ENCODE measurements at regions of chr7 and their contacts with region 1.

Region 1: GRCh38 chr7:143008007-143008901 is 18.7 kb downstream of the OR9A2 start:
- DNase-seq: peak; percentile 55 to 80
- H3K4me3 ChIP-seq: no peak overlapping the region
- H3K27ac ChIP-seq: no peak overlapping the region
- H3K4me1 ChIP-seq: peaks cover 1% of the 10 kb centered on the region; the same call in 1 of the 2 replicates
- H3K27me3 ChIP-seq: no peaks in the 10 kb centered on the region
- CTCF ChIP-seq: peak; percentile 99

Region 2: DNA sequence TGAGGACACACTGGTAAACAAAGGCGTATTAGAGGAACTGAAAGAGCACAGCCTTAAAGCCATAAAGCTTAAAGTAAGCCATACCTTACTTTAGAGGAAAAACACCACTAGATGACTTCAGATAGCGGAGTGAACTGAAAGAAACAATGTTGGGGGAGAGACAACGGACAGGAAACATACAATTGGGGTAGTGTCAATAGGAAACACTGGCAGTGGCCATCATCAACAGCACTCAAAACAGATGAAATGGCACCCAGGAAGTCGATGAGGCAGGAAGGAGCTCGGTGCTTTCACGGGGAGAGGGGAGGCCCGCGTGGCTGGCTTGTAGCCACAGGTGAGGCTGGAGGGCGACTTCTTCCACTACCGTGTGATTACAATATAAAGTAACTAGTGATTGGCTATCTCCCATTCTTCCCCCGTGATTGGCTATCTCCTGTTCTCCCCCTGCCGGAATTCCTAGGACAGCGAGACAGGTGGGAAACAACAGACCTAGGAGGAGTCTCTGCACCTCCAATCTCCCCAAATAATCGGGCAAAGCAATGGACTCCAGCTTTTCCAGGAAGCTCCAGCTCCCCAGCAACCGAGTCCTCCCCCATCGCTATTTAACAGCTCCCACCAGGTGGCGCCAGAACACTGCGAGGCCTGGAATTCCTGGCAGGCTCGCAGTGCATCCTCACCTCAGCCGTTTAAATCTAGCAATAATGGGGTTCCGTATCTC is 1032.3 kb before region 1 on chr7:
- CTCF ChIA-PET with region 1: no interaction called
- POLR2A ChIA-PET with region 1: no interaction called
- intact Hi-C with region 1: loop called (anchors 10 kb)
- DNase-seq: peak; percentile 44 to 86
- H3K4me3 ChIP-seq: no peak overlapping the region
- H3K27ac ChIP-seq: no peak overlapping the region
- H3K4me1 ChIP-seq: no peaks in the 10 kb centered on the region; the same call in 1 of the 2 replicates
- H3K27me3 ChIP-seq: no peaks in the 10 kb centered on the region
- CTCF ChIP-seq: peak; percentile 96

Region 3: GRCh38 chr7:142338633-142339501 is 669.4 kb before region 1 on chr7:
- CTCF ChIA-PET with region 1: interaction called, 5 read pairs
- POLR2A ChIA-PET with region 1: no interaction called
- intact Hi-C with region 1: loop called (anchors 5 kb)
- DNase-seq: peak; percentile 61 to 88
- H3K4me3 ChIP-seq: no peak overlapping the region
- H3K27ac ChIP-seq: no peak overlapping the region
- H3K4me1 ChIP-seq: no peaks in the 10 kb centered on the region
- H3K27me3 ChIP-seq: no peaks in the 10 kb centered on the region
- CTCF ChIP-seq: peak; percentile 76

Region 4: GRCh38 chr7:142516038-142516501 is 492.2 kb before region 1 on chr7:
- CTCF ChIA-PET with region 1: no interaction called
- POLR2A ChIA-PET with region 1: no interaction called
- intact Hi-C with region 1: loop called (anchors 5 kb)
- DNase-seq: peak; percentile 72 to 87
- H3K4me3 ChIP-seq: no peak overlapping the region
- H3K27ac ChIP-seq: peak overlapping the region; percentile 79
- H3K4me1 ChIP-seq: peaks cover 48% of the 10 kb centered on the region
- H3K27me3 ChIP-seq: no peaks in the 10 kb centered on the region
- CTCF ChIP-seq: peak; percentile 97

Region 5: DNA sequence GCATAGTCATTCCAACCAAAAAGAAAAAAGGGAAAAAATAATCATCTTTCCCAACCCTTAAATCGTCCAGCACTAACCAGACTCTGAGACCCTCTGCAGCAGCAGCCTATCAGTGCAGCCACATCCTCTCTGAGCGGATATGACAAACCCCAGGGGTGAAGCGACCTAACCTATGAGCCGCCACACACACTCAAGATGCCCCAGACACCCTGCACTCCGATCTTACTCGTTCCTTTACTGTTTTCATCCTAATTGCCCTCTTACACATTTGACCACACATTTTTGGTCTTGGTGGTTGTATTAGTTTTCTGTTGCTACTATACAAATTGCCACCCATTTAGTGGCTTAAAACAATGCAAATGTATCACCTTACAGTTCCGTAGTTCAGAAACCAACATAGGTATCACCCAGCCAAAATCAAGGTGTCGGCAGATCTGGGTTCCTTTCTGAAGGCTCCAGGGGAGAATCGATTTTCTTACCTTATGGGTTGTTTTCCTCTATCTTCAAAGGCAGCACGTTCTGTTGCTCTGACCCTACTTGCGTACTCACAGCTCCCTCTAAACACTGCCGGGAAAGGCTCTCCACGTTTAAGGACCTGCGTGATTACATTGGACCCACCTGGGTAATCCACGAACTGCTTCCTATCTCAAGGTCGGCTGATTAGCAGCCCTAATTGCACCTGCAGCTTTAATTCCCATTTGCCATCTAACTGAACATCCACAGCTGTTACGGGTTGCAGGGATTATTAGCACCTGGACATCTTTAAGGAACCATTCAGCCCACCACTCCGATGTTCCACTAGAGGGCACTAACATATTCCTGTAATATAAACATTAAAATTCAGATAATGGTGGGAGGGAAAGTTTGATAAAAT is 296.3 kb before region 1 on chr7:
- CTCF ChIA-PET with region 1: interaction called, 3 read pairs
- POLR2A ChIA-PET with region 1: no interaction called
- intact Hi-C with region 1: loop called (anchors 5 kb)
- DNase-seq: peak in 1 of 2 experiments; percentile 54
- H3K4me3 ChIP-seq: no peak overlapping the region
- H3K27ac ChIP-seq: no peak overlapping the region
- H3K4me1 ChIP-seq: no peaks in the 10 kb centered on the region
- H3K27me3 ChIP-seq: no peaks in the 10 kb centered on the region
- CTCF ChIP-seq: peak; percentile 88

Region 6: GRCh38 chr7:142853739-142854371 is 154.4 kb before region 1 on chr7:
- CTCF ChIA-PET with region 1: no interaction called
- POLR2A ChIA-PET with region 1: no interaction called
- intact Hi-C with region 1: loop called (anchors 1 kb)
- DNase-seq: peak; percentile 78 to 85
- H3K4me3 ChIP-seq: peak overlapping the region; percentile 95
- H3K27ac ChIP-seq: peak overlapping the region; percentile 83
- H3K4me1 ChIP-seq: peaks cover 40% of the 10 kb centered on the region
- H3K27me3 ChIP-seq: no peaks in the 10 kb centered on the region
- CTCF ChIP-seq: peak; percentile 92

Region 7: DNA sequence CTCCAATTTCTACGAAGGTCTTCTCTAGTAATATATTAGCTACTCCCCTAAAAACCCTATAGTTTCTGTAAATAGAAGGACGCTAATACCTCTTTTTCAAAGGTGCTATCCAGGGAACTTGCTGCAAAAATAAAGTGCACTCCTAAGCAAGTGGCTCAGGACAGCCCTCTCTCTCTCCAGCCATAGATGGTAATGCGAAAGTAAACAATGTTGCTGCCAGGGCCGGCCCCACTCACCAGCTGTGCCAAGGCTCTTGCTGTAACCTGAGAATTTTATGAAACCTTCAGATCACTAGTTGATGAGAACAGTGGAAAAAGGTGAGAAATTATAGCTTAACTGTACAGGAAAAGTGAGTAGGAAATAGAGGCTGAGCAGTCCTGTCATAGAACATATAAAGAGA is 164.1 kb after region 1 on chr7:
- CTCF ChIA-PET with region 1: no interaction called
- POLR2A ChIA-PET with region 1: no interaction called
- intact Hi-C with region 1: no loop called
- DNase-seq: peak; percentile 63 to 65
- H3K4me3 ChIP-seq: peak overlapping the region; percentile 9; the same call in 1 of the 2 replicates
- H3K27ac ChIP-seq: peak overlapping the region; percentile 42
- H3K4me1 ChIP-seq: peaks cover 16% of the 10 kb centered on the region
- H3K27me3 ChIP-seq: no peaks in the 10 kb centered on the region
- CTCF ChIP-seq: no peak

Region 8: GRCh38 chr7:143292876-143293275 is 284.6 kb after region 1 on chr7:
- CTCF ChIA-PET with region 1: no interaction called
- POLR2A ChIA-PET with region 1: no interaction called
- intact Hi-C with region 1: no loop called
- DNase-seq: no peak
- H3K4me3 ChIP-seq: no peak overlapping the region
- H3K27ac ChIP-seq: no peak overlapping the region
- H3K4me1 ChIP-seq: peaks cover 22% of the 10 kb centered on the region
- H3K27me3 ChIP-seq: no peaks in the 10 kb centered on the region
- CTCF ChIP-seq: no peak

Region 9: DNA sequence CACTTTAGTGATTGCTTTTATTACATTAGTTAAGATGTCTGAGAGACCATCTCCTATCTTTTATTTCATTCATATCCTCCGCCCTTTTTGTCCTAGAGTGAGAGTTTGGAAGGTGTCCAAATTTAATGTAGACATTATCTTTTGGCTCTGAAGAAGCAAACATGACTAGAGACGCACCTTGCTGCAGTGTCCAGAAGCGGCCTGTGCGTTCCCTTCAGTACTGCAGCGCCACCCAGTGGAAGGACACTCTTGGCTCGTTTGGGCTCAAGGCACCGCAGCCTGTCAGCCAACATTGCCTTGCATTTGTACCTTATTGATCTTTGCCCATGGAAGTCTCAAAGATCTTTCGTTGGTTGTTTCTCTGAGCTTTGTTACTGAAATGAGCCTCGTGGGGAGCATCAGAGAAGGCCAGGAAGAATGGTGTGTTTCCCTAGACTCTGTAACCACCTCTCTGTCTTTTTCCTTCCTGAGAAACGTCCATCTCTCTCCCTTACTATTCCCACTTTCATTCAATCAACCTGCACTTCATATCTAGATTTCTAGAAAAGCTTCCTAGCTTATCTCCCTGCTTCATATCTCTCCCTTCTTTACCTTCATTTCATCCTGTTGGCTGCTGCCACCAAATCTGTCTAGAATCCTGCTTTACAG is 297.3 kb after region 1 on chr7:
- CTCF ChIA-PET with region 1: no interaction called
- POLR2A ChIA-PET with region 1: no interaction called
- intact Hi-C with region 1: loop called (anchors 1 kb)
- DNase-seq: peak in 1 of 2 experiments; percentile 72
- H3K4me3 ChIP-seq: no peak overlapping the region
- H3K27ac ChIP-seq: no peak overlapping the region
- H3K4me1 ChIP-seq: no peaks in the 10 kb centered on the region
- H3K27me3 ChIP-seq: no peaks in the 10 kb centered on the region
- CTCF ChIP-seq: peak; percentile 91

Measured in PC-9 (cell line).